Sigmoid colon (tissue), 7 donors: ENCODE measurements at regions of chr9 and their contacts with region 1.

Region 1: GRCh38 chr9:127943731-127944144 is 6.1 kb upstream of the DPM2 start:
- DNase-seq: peak; percentile 94
- H3K4me3 ChIP-seq: no peak overlapping the region
- H3K27ac ChIP-seq: peak overlapping the region; percentile 1 to 48 (median 45)
- H3K4me1 ChIP-seq: peaks cover 0 to 38% (median 35%) of the 10 kb centered on the region in 4 donors
- H3K27me3 ChIP-seq: no peaks in the 10 kb centered on the region
- CTCF ChIP-seq: peak; percentile 84 to 97 (median 95)
- EP300 ChIP-seq: no peak
- POLR2A ChIP-seq: no peak

Region 2: GRCh38 chr9:127921557-127922120 is 22.1 kb before region 1 on chr9:
- intact Hi-C with region 1: no loop called
- DNase-seq: peak; percentile 88
- H3K4me3 ChIP-seq: peak overlapping the region in 2 of 4 donors; percentile 17 to 23
- H3K27ac ChIP-seq: no peak overlapping the region
- H3K4me1 ChIP-seq: peaks cover 0 to 38% (median 36%) of the 10 kb centered on the region in 4 donors
- H3K27me3 ChIP-seq: peaks cover 3 to 16% (median 6%) of the 10 kb centered on the region in 3 donors
- CTCF ChIP-seq: peak; percentile 87 to 97 (median 92)
- EP300 ChIP-seq: no peak
- POLR2A ChIP-seq: no peak

Region 3: GRCh38 chr9:128022886-128023285 is 79.1 kb after region 1 on chr9:
- intact Hi-C with region 1: no loop called
- DNase-seq: no peak
- H3K4me3 ChIP-seq: no peak overlapping the region
- H3K27ac ChIP-seq: no peak overlapping the region
- H3K4me1 ChIP-seq: no peaks in the 10 kb centered on the region
- H3K27me3 ChIP-seq: no peaks in the 10 kb centered on the region
- CTCF ChIP-seq: no peak
- EP300 ChIP-seq: no peak
- POLR2A ChIP-seq: no peak

Region 4: GRCh38 chr9:128034821-128035764 is 91.4 kb after region 1 on chr9:
- intact Hi-C with region 1: loop called (anchors 1 kb)
- DNase-seq: peak; percentile 91
- H3K4me3 ChIP-seq: no peak overlapping the region
- H3K27ac ChIP-seq: no peak overlapping the region
- H3K4me1 ChIP-seq: peaks cover 0 to 5% (median 2%) of the 10 kb centered on the region in 4 donors
- H3K27me3 ChIP-seq: no peaks in the 10 kb centered on the region
- CTCF ChIP-seq: peak; percentile 89 to 96 (median 92)
- EP300 ChIP-seq: no peak
- POLR2A ChIP-seq: no peak